Right ventricle myocardium superior (tissue), 1 donor: ENCODE measurements at regions of chr11 and their contacts with region 1.

Region 1: DNA sequence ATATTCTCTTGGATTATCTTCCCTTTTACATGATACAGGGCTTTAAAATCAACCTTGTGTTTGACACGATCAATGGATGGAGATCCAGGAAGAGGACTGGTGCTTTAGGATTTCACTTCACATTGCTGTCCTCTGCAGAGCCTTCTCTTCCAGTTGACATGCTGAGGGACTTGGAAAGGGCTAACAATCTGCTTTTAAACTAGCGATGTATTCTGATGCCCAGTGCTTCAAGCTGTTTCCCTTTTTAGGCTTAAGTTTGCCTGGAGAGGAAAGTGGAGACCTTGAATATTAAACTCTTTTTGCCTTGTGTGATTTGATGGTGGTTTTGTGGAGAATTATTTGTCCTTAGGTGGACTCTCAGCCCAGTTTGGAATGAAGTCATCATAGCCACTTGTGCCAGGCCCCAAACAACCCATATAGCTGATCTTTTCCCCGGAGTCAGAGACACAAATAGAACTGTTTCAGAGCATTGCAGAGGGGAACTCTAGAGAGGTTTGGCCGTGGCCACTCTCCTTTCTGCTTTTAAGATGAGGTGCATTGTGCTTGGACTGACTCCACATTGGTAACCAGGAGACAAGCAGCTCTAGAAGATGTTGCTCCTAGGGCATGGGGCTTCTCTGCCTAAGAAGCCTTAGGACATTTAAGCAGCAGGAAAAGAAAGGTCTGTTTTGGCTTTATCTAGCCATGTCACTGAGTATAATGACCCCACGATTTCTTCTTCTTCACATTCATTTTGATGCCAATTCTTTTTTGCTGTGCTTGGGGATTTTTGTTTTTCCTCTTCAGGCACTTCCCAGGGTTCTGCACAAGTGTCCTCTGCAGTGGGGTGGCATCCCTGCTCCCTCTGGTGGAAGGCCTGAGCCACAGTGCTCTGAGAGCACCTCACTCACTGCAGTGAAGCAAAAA is 152.8 kb downstream of the NCAM1 start:
- DNase-seq: peak; percentile 63
- ATAC-seq: peak; percentile 93

Region 2: GRCh38 chr11:112588252-112588694 is 525.8 kb before region 1 on chr11:
- intact Hi-C with region 1: loop called (anchors 10 kb)
- DNase-seq: peak; percentile 72
- ATAC-seq: peak; percentile 94

Region 3: GRCh38 chr11:112852143-112852866 is 261.7 kb before region 1 on chr11:
- intact Hi-C with region 1: loop called (anchors 10 kb)
- DNase-seq: no peak
- ATAC-seq: peak; percentile 82

Region 4: GRCh38 chr11:112961146-112961668 is 152.8 kb before region 1 on chr11 and contains the start of gene NCAM1:
- intact Hi-C with region 1: loop called (anchors 10 kb)
- DNase-seq: peak; percentile 90
- ATAC-seq: peak; percentile 73
- total RNA-seq, gene NCAM1: 226 TPM